ENCODE measurements at regions of chr20 and their contacts with region 1.

Region 1: DNA sequence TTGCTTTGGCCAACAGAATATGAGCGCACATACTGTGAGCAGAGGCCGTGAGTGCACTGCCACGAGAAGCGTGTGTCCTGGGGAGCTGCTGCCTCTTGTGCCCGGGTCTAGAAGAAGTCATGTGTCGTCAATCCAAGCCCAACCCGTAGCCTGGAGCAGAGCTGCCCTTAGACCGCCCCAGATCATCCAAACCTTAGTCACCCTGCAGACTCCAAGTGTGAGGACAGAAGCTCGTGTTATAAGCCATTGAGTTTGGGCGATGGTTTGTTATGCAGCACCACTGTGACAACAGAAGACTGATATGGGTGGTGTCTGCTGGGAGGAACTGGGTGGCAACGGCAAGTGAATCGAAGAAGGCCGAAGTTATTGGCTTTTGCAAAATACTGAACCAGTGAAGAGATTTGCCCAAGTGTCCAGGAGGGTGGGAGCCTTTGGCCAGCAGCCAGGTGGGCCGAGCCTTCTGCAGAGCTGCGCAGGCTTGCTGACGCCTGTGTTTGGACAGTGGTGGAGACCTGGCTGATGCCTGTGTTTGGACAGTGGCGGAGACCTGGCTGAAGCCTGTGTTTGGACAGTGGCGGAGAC is 101.3 kb upstream of the SULF2 start:
- DNase-seq: no peak
- ATAC-seq: no peak
- H3K4me3 ChIP-seq: no peak overlapping the region
- H3K4me1 ChIP-seq: no peaks in the 10 kb centered on the region
- CTCF ChIP-seq: no peak

Region 2: DNA sequence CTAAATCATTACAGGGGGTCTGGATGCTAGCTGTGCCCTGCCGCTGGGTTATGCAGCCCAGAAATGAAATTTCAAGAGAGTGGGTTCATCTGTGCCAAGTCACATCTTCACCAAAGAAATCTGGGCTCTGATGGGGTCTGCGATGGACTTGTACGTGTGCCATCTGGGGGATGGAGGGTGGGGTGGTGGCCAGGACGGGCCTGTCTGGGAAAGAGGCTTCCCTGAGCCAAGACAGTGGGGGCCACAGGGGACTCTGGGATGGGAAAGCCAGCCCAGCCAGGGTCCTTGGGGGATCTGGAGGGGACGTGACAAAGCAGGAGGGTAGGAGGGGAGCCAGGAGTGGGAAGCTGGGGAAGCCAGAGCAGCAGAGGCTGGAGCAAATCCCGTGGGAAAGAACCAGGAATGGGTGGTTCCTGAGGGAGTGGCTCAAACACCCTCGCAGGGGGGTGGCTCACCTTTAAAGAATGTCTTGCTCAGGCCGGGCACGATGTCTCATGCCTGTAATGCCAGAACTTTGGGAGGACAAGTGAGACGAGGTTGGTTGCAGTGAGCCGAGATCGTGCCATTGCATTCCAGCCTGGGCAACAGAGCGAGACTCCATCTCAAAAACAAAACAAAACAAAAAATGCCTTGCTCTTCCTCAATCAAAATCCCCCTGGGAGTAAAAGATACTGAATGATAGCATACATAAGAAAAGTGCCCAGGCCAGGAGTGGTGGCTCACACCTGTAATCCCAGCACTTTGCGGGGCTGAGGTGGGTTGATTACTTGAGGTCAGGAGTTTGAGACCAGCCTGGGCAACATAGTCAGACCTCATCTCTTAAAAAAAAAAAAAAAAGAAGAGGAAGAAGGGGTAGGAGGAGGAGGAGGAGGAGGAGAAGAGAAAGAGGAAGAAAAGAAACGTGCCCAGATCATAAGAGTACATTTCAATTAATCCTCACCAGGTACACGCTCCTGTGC is 64.8 kb before region 1 on chr20:
- intact Hi-C with region 1: loop called in 1 of 2 experiments (anchors 10 kb)
- DNase-seq: no peak
- ATAC-seq: no peak
- H3K4me3 ChIP-seq: no peak overlapping the region
- H3K4me1 ChIP-seq: no peaks in the 10 kb centered on the region
- CTCF ChIP-seq: no peak

Region 3: GRCh38 chr20:48523212-48523941 is 636.8 kb after region 1 on chr20:
- intact Hi-C with region 1: loop called in 1 of 2 experiments (anchors 5 kb)
- DNase-seq: peak in 1 of 3 donors; percentile 68
- ATAC-seq: peak; percentile 43
- H3K4me3 ChIP-seq: no peak overlapping the region
- H3K4me1 ChIP-seq: no peaks in the 10 kb centered on the region
- CTCF ChIP-seq: no peak